Endothelial cell of umbilical vein (primary cell): ENCODE measurements at regions of chr1 and their contacts with region 1.

Region 1: GRCh38 chr1:53889304-53890298 is at the start of gene YIPF1:
- DNase-seq: peak; percentile 88
- H3K4me3 ChIP-seq: peak within 1 kb of the TSS; percentile 36 to 86 (median 67)
- H3K27ac ChIP-seq: no peak within 1 kb of the TSS
- H3K4me1 ChIP-seq: peaks cover 8% of the 10 kb centered on the region
- H3K27me3 ChIP-seq: no peaks in the 10 kb centered on the region
- CTCF ChIP-seq: no peak
- POLR2A ChIP-seq: peak; percentile 78
- total RNA-seq, gene YIPF1: 14.8 TPM in 2 replicates

Region 2: GRCh38 chr1:52947490-52947889 is 942.1 kb before region 1 on chr1:
- CTCF ChIA-PET with region 1: no interaction called
- POLR2A ChIA-PET with region 1: no interaction called
- dilution Hi-C with region 1: no loop called
- intact Hi-C with region 1: no loop called
- DNase-seq: no peak
- H3K4me3 ChIP-seq: no peak overlapping the region
- H3K27ac ChIP-seq: no peak overlapping the region
- H3K4me1 ChIP-seq: no peaks in the 10 kb centered on the region
- H3K27me3 ChIP-seq: no peaks in the 10 kb centered on the region
- CTCF ChIP-seq: no peak
- POLR2A ChIP-seq: no peak

Region 3: DNA sequence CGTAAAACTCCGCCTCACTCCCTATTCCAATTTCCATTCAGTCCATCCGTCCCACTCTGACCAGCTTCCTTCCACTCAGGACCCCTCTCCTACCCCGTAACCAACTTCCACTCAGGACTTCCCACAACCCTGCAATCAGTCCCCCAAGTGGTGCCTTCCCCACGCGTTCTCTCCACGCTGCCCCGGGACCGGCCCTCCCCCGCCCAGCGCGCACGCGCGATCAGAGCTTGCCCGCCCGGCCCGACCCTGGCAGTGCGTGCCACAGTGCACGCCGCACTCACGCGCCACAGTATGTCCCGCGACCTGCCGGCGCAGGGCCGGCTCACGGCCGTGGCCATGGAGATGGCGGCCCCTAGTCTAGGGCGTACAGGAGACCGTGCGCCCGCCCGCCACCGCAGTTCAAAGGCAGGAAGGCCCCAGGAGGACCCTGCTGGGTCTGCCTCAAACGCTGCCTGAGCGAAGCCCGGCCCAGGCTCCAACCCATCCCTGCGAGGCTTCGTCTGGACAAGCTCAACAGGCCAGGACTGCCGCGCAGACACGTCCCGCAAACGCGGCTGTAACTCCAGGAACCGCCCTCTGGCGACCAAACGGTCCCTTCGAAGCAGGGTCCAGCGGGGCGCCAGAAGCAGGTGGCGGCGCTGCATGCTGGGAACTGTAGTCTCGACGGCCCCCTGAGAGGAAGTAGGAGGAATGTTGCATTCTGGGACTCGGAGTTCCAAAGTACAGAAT is 51.5 kb before region 1 on chr1 and contains the start of gene NDC1:
- CTCF ChIA-PET with region 1: no interaction called
- POLR2A ChIA-PET with region 1: no interaction called
- dilution Hi-C with region 1: no loop called
- intact Hi-C with region 1: loop called (anchors 2 kb)
- DNase-seq: peak; percentile 96
- H3K4me3 ChIP-seq: peak within 1 kb of the TSS; percentile 86 to 97 (median 91)
- H3K27ac ChIP-seq: peak within 1 kb of the TSS; percentile 82
- H3K4me1 ChIP-seq: peaks cover 5% of the 10 kb centered on the region
- H3K27me3 ChIP-seq: no peaks in the 10 kb centered on the region
- CTCF ChIP-seq: peak in 1 of 2 donors; percentile 26
- POLR2A ChIP-seq: no peak
- total RNA-seq, gene NDC1: 29.2 and 30.2 TPM in 2 replicates

Region 4: GRCh38 chr1:53945433-53946251 is 56.0 kb after region 1 on chr1 and contains the start of gene IFT25:
- CTCF ChIA-PET with region 1: interaction called, 8 read pairs
- POLR2A ChIA-PET with region 1: no interaction called
- dilution Hi-C with region 1: no loop called
- intact Hi-C with region 1: loop called (anchors 1 kb)
- DNase-seq: peak; percentile 95
- H3K4me3 ChIP-seq: peak within 1 kb of the TSS; percentile 88 to 95 (median 91)
- H3K27ac ChIP-seq: peak within 1 kb of the TSS; percentile 43
- H3K4me1 ChIP-seq: peaks cover 20% of the 10 kb centered on the region
- H3K27me3 ChIP-seq: no peaks in the 10 kb centered on the region
- CTCF ChIP-seq: no peak
- POLR2A ChIP-seq: peak; percentile 77
- total RNA-seq, gene IFT25: 31.4 and 34.0 TPM in 2 replicates